Caco-2 (cell line): ENCODE measurements at regions of chr1 and their contacts with region 1.

Region 1: GRCh38 chr1:19974822-19975416 is 4.5 kb downstream of the PLA2G2A start:
- DNase-seq: peak; percentile 62 to 69
- H3K4me3 ChIP-seq: no peak overlapping the region
- H3K4me3 Mint-ChIP-seq: no peak overlapping the region
- H3K27ac Mint-ChIP-seq: peak overlapping the region; percentile 42
- H3K4me1 ChIP-seq: peaks cover 20% of the 10 kb centered on the region
- H3K4me1 Mint-ChIP-seq: peaks cover 8% of the 10 kb centered on the region
- H3K27me3 ChIP-seq: no peaks in the 10 kb centered on the region
- H3K27me3 Mint-ChIP-seq: no peaks in the 10 kb centered on the region
- CTCF ChIP-seq: peak; percentile 71 to 92

Region 2: DNA sequence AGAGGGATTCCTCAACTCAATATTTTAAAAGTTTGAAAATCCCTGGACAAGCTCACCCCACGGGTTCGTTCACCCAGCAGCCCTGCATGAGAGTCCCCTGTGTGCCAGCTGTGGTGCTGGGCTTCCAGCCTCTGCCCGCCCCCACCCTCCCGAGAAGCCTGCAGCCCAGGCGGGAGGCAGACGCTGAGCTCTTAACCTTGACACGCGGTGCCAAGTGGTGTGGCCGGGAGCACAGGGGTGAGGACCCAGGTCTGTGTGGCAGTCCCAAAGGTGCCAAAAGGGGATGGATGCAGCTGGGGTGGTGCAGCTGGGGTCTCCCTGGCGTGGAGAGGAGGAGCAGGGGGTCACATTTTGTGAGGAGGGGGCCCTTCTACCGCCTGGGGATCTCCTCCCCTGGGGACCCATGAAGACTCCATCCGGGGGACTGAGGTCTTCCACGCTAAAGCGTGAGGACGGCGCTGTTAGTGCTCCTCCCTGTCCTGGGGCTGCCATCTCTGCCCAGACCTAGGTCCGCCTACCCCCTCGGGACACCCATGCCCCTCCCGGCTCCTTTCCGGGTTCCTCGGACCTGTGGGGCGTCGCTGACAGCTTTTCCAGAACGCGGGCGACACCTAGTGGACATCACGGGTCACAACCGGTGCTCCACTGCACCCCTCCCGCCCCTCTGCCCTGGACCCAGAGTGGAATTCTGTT is 177.1 kb after region 1 on chr1:
- CTCF ChIA-PET with region 1: interaction called, 19 read pairs
- POLR2A ChIA-PET with region 1: no interaction called
- intact Hi-C with region 1: loop called (anchors 1 kb)
- DNase-seq: peak; percentile 81 to 85
- H3K4me3 ChIP-seq: 0 out of 2 replicates have a peak overlapping the region, but pooled peaks have one; percentile 10
- H3K4me3 Mint-ChIP-seq: peak overlapping the region; percentile 47
- H3K27ac Mint-ChIP-seq: peak overlapping the region; percentile 35
- H3K4me1 ChIP-seq: no peaks in the 10 kb centered on the region
- H3K4me1 Mint-ChIP-seq: no peaks in the 10 kb centered on the region
- H3K27me3 ChIP-seq: no peaks in the 10 kb centered on the region
- H3K27me3 Mint-ChIP-seq: no peaks in the 10 kb centered on the region
- CTCF ChIP-seq: peak; percentile 80 to 92

Region 3: GRCh38 chr1:20194757-20195461 is 220.0 kb after region 1 on chr1:
- CTCF ChIA-PET with region 1: no interaction called
- POLR2A ChIA-PET with region 1: no interaction called
- intact Hi-C with region 1: loop called (anchors 1 kb)
- DNase-seq: peak; percentile 46 to 62
- H3K4me3 ChIP-seq: no peak overlapping the region
- H3K4me3 Mint-ChIP-seq: no peak overlapping the region
- H3K27ac Mint-ChIP-seq: no peak overlapping the region
- H3K4me1 ChIP-seq: no peaks in the 10 kb centered on the region
- H3K4me1 Mint-ChIP-seq: no peaks in the 10 kb centered on the region
- H3K27me3 ChIP-seq: no peaks in the 10 kb centered on the region
- H3K27me3 Mint-ChIP-seq: peaks cover 3% of the 10 kb centered on the region
- CTCF ChIP-seq: peak; percentile 54 to 65